ENCODE measurements at regions of chr19 and their contacts with region 1.

Region 1: GRCh38 chr19:48403606-48404005 is 10.1 kb downstream of the GRIN2D start:
- DNase-seq: no peak

Region 2: DNA sequence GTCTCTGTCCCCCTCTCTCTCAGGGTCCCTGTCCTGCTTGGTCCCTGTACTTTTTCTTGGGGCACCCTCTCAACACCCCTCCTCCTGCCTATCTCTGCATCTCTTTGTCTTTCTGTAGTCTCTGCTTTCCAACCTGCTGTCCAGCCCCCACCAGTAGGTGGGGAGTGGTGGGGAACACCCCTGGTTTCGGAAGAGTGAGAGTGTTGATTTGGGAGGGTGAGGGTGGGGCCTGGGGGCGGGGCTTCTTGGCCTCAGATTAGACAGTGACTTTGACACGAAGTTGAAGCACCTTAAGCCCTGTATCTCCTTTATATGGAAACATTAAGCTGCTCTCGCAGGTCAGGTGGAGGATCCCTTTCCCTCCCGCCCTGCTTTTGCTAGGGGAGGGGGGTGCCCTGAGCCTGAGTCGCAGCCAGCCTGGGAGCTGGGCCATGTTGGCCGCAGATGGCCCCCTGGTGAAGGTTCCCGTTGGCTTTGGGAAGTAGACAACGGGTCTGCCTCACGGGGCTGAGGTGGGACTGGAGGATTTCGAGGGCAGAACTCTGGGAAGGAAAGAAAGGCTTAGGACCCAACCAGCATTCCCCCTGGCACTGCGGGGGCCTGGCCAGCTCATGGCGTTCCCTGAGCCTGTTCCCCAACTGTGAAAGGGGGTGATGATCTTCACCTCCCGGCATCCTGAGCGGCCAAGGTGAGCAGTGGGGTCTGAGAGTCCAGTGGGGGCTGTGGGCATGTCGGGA is 51.7 kb after region 1 on chr19 and contains the start of gene KCNJ14:
- intact Hi-C with region 1: loop called in 1 of 2 experiments (anchors 1 kb)
- DNase-seq: no peak
- total RNA-seq, gene KCNJ14: 0.52 to 0.65 TPM

Region 3: DNA sequence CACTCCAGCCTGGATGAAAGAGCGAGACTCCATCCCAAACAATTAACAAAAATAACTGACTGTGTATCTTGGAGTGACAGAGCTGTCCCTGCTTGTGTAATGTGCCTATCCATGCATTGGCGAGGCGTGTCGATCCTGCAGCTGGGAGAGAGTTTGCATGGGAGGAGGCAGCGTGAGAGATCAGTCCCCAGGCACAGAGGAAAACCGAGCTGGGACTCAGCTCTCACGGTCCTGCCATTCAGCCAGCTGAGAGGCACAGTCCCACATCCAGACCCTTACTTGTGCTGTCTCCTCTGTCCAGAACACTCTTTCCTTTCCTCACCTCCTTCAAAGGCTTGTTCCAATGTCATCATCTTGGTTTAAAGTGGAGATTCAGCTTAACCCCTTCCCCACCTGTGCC is 136.5 kb after region 1 on chr19:
- intact Hi-C with region 1: no loop called
- DNase-seq: no peak

Region 4: GRCh38 chr19:48553676-48554386 is 150.2 kb after region 1 on chr19:
- intact Hi-C with region 1: no loop called
- DNase-seq: no peak